ENCODE measurements at regions of chr3 and their contacts with region 1.

Region 1: DNA sequence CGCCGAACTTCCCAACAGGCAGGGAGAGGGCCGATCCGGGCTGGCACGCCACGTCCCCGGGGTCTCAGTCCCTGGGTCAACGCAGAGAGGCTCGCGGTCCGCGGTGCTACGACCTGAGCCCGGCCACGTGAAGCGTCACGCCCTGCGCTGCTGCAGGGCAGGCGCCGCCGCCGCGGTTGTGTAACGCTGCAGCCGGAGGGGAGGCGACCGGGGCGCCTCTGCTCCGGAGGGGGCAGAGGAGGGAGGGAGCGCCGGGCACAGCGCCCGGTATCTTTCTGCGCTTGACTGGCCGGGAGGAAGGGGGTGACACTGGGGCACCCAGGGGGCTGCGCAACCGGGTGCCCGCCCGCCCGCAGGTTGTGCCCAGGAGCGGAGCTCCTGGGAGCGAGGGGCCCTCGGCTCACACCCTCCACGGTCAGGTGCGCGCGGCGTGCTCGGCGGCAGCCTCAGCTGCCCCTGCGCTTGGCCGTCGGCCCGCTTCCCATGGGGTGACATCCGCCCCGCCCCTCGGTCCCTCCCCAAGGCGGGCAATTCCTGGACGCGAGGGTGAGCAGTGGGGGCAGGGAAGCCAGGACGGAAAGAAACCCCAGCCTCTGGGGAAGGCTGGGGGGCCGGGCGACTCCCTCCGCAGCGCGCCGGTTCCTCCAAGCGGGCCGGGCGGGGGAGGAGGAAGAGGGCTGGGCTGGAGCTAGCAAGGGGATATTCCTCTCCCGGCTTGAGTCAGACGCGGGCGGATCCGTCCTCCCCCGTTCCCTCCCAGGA is 852 bp upstream of the BHLHE40 start:
- DNase-seq: peak; percentile 86
- H3K4me3 ChIP-seq: peak overlapping the region; percentile 51 to 72
- H3K27ac ChIP-seq: peak overlapping the region; percentile 89 to 95
- H3K4me1 ChIP-seq: peaks cover 17 to 20% of the 10 kb centered on the region in 2 experiments; a peak in 3 of 4 replicates
- H3K27me3 ChIP-seq: no peaks in the 10 kb centered on the region
- CTCF ChIP-seq: peak; percentile 33
- EP300 ChIP-seq: peak in 1 of 2 experiments; percentile 6; a peak in 1 of 4 replicates
- RAD21 ChIP-seq: no peak

Region 2: DNA sequence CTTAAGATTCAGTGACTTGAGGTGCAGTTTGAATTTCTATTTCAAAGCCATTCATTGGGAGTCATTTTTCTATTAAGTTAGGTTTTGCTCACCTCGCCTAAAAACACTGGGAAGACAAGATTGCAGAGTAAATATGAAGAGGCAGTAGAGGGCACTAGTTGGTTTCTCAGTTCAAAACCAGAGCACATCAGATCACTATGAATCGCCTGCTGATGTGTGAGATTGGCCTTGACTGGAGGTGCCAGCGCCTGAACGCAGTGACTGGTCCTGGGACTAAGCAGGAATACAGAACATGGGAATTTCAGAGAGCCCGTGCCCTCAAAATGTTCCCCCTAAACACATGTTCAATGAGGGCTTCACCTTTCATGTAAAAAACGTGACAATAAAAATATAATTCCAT is 256.3 kb before region 1 on chr3:
- CTCF ChIA-PET with region 1: interaction called, 277 read pairs
- POLR2A ChIA-PET with region 1: no interaction called
- DNase-seq: peak; percentile 37
- H3K4me3 ChIP-seq: no peak overlapping the region
- H3K27ac ChIP-seq: peak overlapping the region; percentile 66 to 94
- H3K4me1 ChIP-seq: peaks cover 28 to 36% of the 10 kb centered on the region in 2 experiments
- H3K27me3 ChIP-seq: no peaks in the 10 kb centered on the region
- CTCF ChIP-seq: peak; percentile 53
- EP300 ChIP-seq: no peak
- RAD21 ChIP-seq: peak; percentile 76

Region 3: DNA sequence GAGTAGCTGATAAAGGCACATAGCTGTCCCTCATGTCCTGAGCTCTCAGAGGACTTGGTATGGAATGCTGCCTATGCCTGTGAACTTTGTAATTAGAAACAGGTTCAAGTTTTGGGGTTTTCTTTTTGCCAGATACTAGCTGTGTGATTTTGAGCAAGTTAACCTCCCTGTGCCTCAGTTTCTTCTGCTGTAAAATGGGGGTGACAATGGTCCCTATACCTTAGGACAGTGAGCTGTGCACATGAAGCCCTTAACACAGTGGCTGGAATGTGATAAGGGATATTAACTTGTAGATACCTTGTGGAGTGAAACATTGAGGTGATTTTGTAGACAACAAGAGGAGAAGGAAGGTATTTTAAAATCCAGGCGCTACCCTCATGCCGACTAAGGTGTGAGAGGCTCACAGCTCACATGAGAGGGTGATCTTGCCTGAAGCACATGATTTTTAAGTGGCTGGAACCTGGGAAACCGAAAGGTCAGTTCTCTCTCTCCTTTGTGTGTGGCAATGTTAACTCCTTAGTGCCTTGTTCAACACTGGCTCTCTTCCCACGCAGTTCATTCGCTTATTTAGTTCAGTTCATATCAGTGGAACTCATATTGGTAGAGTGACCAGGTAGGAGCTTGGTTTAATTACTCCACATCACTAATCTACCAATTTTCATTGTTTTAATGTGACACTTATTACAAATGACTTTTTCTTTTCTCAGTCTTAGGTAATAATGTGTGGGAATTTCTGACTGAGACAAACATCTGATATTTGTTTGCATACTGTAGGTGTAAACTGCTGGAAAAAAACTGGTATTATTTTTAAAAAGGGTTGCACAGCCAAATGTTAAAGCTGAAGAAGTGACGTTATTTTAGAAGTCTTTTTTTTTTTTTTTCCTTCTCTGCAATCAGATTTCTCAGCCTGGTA is 249.1 kb before region 1 on chr3:
- CTCF ChIA-PET with region 1: interaction called, 10 read pairs
- POLR2A ChIA-PET with region 1: no interaction called
- DNase-seq: no peak
- H3K4me3 ChIP-seq: no peak overlapping the region
- H3K27ac ChIP-seq: no peak overlapping the region
- H3K4me1 ChIP-seq: peaks cover 0 to 14% of the 10 kb centered on the region in 2 experiments; a peak in 2 of 4 replicates
- H3K27me3 ChIP-seq: no peaks in the 10 kb centered on the region
- CTCF ChIP-seq: no peak
- EP300 ChIP-seq: no peak
- RAD21 ChIP-seq: no peak

Region 4: DNA sequence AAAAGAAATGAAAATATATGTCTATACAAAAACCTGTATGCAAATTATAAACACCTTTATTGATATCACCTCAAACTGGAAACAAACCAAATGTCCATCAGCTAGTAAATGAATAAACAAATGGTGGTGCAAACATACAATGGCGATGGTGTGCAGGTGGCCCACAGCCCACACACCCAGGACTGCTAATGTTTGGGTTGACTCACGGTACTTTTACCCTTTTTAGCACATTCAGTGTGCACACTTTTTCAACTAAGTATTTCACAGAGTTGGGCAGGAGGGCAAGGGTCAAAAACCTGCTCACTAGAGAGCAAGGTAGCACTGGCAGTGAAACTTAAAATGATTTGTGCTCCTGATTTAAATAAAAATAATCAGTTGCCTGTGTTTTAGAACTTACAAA is 122.2 kb before region 1 on chr3:
- CTCF ChIA-PET with region 1: no interaction called
- POLR2A ChIA-PET with region 1: no interaction called
- DNase-seq: no peak
- H3K4me3 ChIP-seq: no peak overlapping the region
- H3K27ac ChIP-seq: no peak overlapping the region
- H3K4me1 ChIP-seq: no peaks in the 10 kb centered on the region
- H3K27me3 ChIP-seq: no peaks in the 10 kb centered on the region
- CTCF ChIP-seq: no peak
- EP300 ChIP-seq: no peak
- RAD21 ChIP-seq: no peak

Region 5: DNA sequence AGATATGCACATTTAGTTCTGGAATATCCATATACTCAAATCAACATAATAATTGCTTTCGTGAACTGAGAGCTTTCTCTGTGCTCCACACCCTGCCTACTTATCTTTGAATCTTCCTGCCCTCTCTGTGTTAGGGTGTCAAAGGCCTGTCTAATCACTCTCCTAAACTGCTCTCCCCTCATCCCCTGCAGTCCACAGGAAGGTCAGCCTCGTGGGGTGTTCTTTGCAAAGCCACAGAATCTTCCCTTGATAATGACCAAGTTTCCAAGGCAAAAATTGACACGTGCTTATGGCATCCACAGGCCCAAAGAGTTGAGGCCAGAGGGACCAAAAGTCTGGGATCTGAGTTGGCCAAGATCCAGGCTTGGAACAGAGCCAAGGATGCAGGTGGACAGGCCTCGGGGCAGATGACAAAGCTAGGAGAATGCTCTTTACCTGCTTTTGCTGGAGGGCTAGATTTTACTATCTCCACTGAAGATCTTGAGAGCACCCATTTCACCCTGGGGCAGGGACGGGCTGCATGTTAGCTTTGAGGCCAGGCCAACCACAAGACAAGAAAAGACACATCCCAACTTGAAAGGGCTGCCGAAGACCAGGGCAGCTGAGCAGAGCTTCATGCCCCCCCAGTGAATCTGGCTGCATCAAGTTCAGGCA is 21.3 kb after region 1 on chr3:
- CTCF ChIA-PET with region 1: interaction called, 15 read pairs
- POLR2A ChIA-PET with region 1: interaction called, 4 read pairs
- DNase-seq: peak; percentile 40
- H3K4me3 ChIP-seq: no peak overlapping the region
- H3K27ac ChIP-seq: no peak overlapping the region; a peak in 1 of 4 replicates
- H3K4me1 ChIP-seq: peaks cover 8 to 20% of the 10 kb centered on the region in 2 experiments; a peak in 3 of 4 replicates
- H3K27me3 ChIP-seq: no peaks in the 10 kb centered on the region
- CTCF ChIP-seq: no peak
- EP300 ChIP-seq: no peak
- RAD21 ChIP-seq: no peak

Region 6: DNA sequence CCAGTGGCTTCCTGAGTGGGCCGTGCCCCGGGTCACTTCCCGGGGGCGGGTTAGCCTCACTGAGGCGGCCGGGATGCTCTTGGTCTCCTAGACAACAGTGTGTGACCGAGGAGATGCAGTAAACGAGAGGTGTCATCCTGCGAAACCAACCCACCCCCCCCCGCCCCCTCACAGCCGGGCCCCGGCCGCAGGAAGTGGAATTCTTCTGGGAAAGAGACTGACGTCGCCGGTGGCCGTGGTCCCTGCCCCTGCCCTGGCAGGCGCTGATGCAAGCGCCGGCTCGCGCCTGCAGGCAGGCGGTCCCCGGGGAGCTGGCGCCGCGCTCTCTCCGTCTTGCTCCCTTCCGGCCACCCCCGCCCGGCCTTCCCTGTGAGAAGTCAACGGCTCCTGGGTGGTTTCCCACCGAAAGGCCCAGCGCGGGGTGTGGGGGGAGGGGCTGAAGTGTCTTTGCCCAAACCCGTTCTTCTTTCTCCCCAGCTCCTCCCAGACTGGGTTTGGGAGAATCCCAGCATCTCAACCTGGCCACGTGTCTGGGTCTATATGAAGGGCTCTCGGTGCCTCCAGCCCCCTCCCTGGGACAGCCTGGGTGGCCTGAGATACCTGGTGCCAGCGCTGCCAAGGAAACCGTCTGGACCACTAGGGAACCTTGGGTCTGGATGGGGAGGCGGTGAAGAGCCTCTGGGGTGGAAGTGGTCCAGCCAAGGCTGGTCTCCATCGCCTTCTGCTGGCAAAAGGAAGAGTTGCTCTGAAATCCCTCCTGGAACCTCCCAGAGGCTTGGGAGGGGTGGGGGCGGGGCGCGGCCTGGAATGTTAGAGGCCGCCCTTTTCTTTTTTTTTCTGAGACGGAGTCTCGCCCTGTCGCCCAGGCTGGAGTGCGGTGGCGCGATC is 48.2 kb after region 1 on chr3:
- CTCF ChIA-PET with region 1: interaction called, 35 read pairs
- POLR2A ChIA-PET with region 1: interaction called, 6 read pairs
- DNase-seq: peak; percentile 91
- H3K4me3 ChIP-seq: peak overlapping the region; percentile 53 to 70
- H3K27ac ChIP-seq: peak overlapping the region; percentile 92 to 95
- H3K4me1 ChIP-seq: peaks cover 18 to 19% of the 10 kb centered on the region in 2 experiments; a peak in 2 of 4 replicates
- H3K27me3 ChIP-seq: no peaks in the 10 kb centered on the region
- CTCF ChIP-seq: peak; percentile 74
- EP300 ChIP-seq: peak in 1 of 2 experiments; percentile 46; a peak in 1 of 4 replicates
- RAD21 ChIP-seq: peak; percentile 91

Region 7: GRCh38 chr3:5057857-5058324 is 79.5 kb after region 1 on chr3:
- CTCF ChIA-PET with region 1: interaction called, 13 read pairs
- POLR2A ChIA-PET with region 1: no interaction called
- DNase-seq: peak; percentile 46
- H3K4me3 ChIP-seq: no peak overlapping the region; a peak in 1 of 4 replicates
- H3K27ac ChIP-seq: no peak overlapping the region
- H3K4me1 ChIP-seq: peaks cover 0 to 10% of the 10 kb centered on the region in 2 experiments; a peak in 1 of 4 replicates
- H3K27me3 ChIP-seq: no peaks in the 10 kb centered on the region
- CTCF ChIP-seq: peak; percentile 79
- EP300 ChIP-seq: no peak
- RAD21 ChIP-seq: peak; percentile 93

Region 8: GRCh38 chr3:5205165-5205941 is 227.0 kb after region 1 on chr3:
- CTCF ChIA-PET with region 1: no interaction called
- POLR2A ChIA-PET with region 1: no interaction called
- DNase-seq: no peak
- H3K4me3 ChIP-seq: no peak overlapping the region
- H3K27ac ChIP-seq: peak overlapping the region in 1 of 2 experiments; percentile 11; a peak in 2 of 4 replicates
- H3K4me1 ChIP-seq: peaks cover 0 to 6% of the 10 kb centered on the region in 2 experiments; a peak in 2 of 4 replicates
- H3K27me3 ChIP-seq: no peaks in the 10 kb centered on the region
- CTCF ChIP-seq: no peak
- EP300 ChIP-seq: no peak
- RAD21 ChIP-seq: no peak

Region 9: GRCh38 chr3:5275529-5275928 is 297.1 kb after region 1 on chr3:
- CTCF ChIA-PET with region 1: no interaction called
- POLR2A ChIA-PET with region 1: no interaction called
- DNase-seq: no peak
- H3K4me3 ChIP-seq: no peak overlapping the region
- H3K27ac ChIP-seq: no peak overlapping the region
- H3K4me1 ChIP-seq: no peaks in the 10 kb centered on the region
- H3K27me3 ChIP-seq: no peaks in the 10 kb centered on the region
- CTCF ChIP-seq: no peak
- EP300 ChIP-seq: no peak
- RAD21 ChIP-seq: no peak

Measured in SK-N-SH (cell line).